Activated B cell treated with CpG ODN at 0.5 μM for 24 hours (primary cell): ENCODE measurements at regions of chr17 and their contacts with region 1.

Region 1: DNA sequence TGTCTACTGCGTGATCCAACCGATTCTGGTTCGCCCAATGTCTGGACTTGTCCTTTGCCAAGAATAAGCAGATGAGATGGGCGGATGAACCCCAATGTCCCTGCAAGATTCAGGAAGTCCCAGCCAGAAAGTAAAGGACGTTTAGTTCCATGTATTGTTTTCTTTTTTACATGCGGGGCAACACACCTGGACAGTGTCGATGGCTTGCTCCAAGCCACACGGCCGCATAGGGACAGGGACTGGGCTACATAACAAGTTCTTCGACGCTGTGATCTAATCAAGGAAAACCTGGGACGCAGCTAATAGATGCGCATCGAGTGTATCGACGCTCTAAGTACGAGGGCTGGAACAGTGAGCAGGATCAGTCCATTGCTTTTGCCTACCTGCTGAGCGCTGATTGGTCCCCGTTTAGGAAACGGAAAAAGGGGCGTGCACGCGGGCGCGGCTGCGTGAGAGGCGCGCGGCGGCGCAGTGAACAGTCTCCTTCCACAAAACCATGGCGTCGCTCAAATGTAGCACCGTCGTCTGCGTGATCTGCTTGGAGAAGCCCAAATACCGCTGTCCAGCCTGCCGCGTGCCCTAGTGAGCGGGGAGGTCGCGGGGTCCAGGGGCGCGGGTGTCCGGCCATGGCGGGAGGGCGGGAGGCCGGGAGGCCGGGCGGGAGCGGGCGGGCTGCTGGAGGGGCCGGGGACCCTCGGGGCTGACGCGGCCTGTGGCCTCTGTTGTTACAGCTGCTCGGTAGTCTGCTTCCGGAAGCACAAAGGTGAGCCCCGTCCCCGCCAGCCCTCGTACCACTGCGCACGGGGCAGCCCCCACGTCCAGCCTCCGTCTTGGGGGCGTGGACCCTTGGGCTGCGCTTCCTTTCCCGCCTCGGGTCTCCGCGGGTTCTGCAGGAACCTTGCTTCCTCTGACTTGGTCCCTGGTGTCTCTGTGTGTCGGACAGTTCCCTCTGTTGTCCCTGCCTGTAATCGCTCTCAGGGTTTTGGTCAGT is at the start of gene ZNHIT3:
- DNase-seq: peak; percentile 80
- ATAC-seq: peak; percentile 89
- H3K4me3 Mint-ChIP-seq: peak within 1 kb of the TSS; percentile 98
- H3K27ac Mint-ChIP-seq: peak within 1 kb of the TSS; percentile 96
- H3K4me1 Mint-ChIP-seq: peaks cover 60% of the 10 kb centered on the region
- H3K27me3 Mint-ChIP-seq: peaks cover 10% of the 10 kb centered on the region
- CTCF ChIP-seq: no peak
- total RNA-seq, gene ZNHIT3: 35.5 and 37.0 TPM in 2 replicates

Region 2: DNA sequence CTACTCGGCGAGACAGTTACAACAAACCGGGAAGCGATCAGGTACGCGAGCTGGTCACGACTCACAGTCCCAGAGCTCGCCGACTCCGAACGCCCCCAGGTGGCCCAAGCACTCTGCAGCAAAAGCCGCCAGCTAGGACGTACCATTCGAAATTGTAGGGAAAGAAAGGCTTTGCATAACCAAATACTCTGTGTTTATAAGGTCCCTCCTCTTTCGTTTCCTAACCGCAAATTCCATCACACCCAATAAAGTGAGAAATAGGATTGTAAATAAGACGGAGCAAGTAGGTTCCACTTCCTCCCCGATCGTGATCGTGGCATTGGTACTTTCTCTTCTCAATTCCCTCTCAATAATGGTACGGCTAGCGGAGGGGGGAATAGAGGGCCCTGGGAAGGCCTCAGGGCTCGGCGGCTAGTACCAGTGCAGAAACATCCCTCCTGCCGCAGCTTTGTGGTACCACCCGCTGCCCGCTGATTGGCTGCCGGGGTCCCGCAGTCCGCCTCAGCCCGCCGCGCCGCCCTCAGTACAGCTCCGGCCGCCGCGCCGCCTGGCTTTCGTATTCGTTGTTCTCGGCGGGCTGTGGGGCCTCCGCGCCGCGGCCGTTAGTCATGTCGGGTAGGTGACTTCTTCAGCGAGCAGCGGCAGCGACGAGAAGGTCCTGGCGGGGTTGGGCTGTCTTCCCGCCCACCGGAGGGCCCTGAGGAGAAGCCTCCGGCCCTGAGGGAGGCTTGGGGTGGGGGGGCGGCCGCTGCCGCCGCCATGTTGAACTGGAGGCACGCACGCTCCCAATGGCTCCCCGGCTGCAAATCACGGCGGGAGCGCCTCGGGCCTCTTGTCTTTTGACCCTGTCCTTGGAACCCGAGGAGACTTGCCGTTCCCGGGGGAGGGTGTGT is 677.3 kb before region 1 on chr17 and contains the start of gene TAF15:
- CTCF ChIA-PET with region 1: no interaction called
- POLR2A ChIA-PET with region 1: interaction called, 4 read pairs
- intact Hi-C with region 1: loop called (anchors 1 kb)
- DNase-seq: peak; percentile 91
- ATAC-seq: peak; percentile 88
- H3K4me3 Mint-ChIP-seq: peak within 1 kb of the TSS; percentile 93
- H3K27ac Mint-ChIP-seq: peak within 1 kb of the TSS; percentile 100
- H3K4me1 Mint-ChIP-seq: peaks cover 55% of the 10 kb centered on the region
- H3K27me3 Mint-ChIP-seq: no peaks in the 10 kb centered on the region
- CTCF ChIP-seq: no peak
- total RNA-seq, gene TAF15: 224 and 243 TPM in 2 replicates

Region 3: GRCh38 chr17:35969558-35970380 is 516.7 kb before region 1 on chr17:
- CTCF ChIA-PET with region 1: interaction called, 96 read pairs
- POLR2A ChIA-PET with region 1: interaction called, 4 read pairs
- intact Hi-C with region 1: loop called (anchors 1 kb)
- DNase-seq: peak; percentile 49
- ATAC-seq: peak; percentile 84
- H3K4me3 Mint-ChIP-seq: no peak overlapping the region
- H3K27ac Mint-ChIP-seq: no peak overlapping the region
- H3K4me1 Mint-ChIP-seq: peaks cover 1% of the 10 kb centered on the region
- H3K27me3 Mint-ChIP-seq: peaks cover 5% of the 10 kb centered on the region
- CTCF ChIP-seq: peak; percentile 62

Region 4: DNA sequence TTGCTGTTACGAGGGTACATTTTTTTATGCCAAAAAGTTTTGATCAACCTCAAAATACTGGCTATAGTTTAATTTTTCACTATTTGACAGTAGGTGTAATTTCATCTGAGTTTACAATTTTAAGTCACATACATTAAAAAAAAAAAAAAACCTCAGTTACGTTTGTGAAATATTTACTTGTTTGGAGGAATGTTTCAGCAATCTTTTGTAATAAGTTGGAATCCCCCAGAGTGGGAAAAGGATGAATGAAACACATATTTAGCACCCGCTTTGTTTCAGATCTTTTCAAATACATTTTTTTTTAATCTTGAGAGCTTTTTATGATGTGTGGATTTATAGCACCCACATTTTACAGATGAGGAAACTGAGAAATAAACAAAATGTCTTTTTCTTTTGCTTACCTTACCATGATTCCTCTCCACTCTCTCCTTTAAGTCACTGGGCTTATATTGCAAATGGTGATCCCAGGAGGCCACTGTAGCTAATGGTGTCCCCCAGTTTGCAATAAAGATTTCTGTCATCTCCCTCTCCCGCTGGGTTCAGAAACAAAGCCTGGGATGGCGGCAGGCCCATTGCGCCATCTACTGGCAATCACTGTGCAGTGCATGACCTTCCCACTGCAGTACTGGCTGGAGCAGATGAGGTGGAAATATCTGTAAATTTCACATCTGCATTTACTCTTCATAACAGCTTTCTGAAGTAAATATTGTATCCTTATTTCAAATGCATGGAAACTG is 337.8 kb before region 1 on chr17:
- CTCF ChIA-PET with region 1: interaction called, 9 read pairs
- POLR2A ChIA-PET with region 1: interaction called, 3 read pairs
- intact Hi-C with region 1: loop called (anchors 5 kb)
- DNase-seq: peak; percentile 60
- ATAC-seq: peak; percentile 87
- H3K4me3 Mint-ChIP-seq: peak overlapping the region; percentile 25
- H3K27ac Mint-ChIP-seq: peak overlapping the region; percentile 36
- H3K4me1 Mint-ChIP-seq: peaks cover 49% of the 10 kb centered on the region
- H3K27me3 Mint-ChIP-seq: peaks cover 5% of the 10 kb centered on the region
- CTCF ChIP-seq: peak; percentile 86

Region 5: DNA sequence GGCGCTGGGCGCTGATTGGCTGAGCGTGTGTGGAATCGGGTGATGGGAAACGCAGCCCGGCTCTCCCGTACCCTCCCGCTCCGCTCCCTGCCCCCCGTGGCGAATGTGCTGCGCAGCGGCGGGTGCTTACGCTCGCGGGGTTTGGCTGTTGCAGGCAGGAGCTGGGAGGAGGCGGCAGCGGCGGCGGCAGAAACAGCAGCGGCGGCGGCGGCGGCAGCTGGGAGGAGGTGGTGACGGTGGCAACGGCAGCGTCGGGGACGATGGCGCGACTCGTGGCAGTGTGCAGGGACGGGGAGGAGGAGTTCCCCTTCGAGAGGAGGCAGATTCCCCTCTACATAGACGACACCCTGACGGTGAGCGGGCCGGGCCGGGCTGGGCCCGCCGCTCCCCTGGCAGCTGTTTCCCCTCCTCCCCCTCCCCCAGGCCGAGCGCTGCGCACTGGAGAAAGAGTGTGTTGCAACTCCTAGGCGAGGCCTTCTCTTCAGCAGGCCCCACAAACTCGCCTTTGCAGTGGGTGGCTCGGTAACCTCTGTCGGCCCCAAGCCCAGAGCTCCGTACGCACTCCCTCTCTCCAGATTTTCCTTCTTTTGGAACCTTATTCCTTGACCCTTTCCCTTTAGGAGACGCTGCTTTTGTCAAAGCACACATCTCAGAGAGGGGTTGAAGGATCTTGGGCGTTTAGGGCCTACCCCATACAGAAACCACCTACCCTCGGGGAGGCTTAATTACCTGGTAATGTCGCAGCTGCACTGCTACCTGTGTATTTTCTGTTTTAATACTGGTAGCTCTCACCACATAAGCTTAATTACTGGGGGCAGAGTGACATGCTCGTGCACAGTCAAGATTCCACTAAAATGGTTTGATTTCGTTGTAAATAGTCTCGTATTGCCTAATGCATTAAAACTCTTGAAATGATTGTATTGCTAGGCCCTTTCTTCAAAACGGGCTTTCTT is 59.2 kb after region 1 on chr17:
- CTCF ChIA-PET with region 1: no interaction called
- POLR2A ChIA-PET with region 1: interaction called, 14 read pairs
- intact Hi-C with region 1: loop called (anchors 1 kb)
- DNase-seq: peak; percentile 94
- ATAC-seq: peak; percentile 67
- H3K4me3 Mint-ChIP-seq: peak overlapping the region; percentile 92
- H3K27ac Mint-ChIP-seq: peak overlapping the region; percentile 92
- H3K4me1 Mint-ChIP-seq: peaks cover 59% of the 10 kb centered on the region
- H3K27me3 Mint-ChIP-seq: no peaks in the 10 kb centered on the region
- CTCF ChIP-seq: no peak

Region 6: DNA sequence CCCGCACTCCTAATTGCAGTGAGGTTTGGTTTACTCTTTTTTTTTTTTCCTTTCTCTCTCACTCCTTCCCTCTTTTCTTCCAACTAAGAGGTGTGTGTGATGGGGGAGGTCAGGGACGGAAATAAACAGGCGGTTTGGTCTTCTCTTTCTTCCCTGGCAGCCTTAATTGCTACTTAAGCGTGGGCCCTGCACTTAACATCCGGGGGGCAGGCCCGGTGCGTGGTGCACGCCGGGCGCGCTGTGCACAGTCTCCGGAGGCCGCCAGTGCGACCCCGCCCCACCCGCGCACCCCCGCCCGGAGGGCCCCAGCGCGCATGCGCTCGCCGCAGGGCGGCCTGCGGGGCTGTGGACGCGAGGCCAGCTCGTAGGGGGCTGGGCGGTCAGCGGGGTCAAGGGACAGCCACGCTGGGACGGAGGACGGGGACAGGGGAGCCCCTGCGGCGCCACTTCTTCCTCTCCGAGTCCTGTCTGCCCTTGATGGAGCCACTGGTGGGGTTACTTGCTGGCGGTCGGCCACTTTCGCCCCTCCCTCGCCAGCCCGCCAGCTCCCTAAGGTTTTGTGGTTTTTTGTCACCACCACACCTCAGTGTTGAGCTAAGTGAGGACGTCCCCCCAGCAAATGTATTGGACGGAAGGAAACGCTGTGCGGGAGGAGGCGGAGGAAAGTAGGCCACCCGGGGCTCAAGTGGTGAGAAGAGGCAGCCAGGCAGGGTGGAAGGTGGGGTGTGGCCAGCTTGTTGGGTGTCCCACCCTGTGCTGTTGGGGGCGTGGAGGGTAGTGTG is 235.8 kb after region 1 on chr17:
- CTCF ChIA-PET with region 1: no interaction called
- POLR2A ChIA-PET with region 1: no interaction called
- intact Hi-C with region 1: loop called (anchors 1 kb)
- DNase-seq: peak; percentile 82
- ATAC-seq: peak; percentile 94
- H3K4me3 Mint-ChIP-seq: peak overlapping the region; percentile 85
- H3K27ac Mint-ChIP-seq: peak overlapping the region; percentile 90
- H3K4me1 Mint-ChIP-seq: peaks cover 54% of the 10 kb centered on the region
- H3K27me3 Mint-ChIP-seq: peaks cover 2% of the 10 kb centered on the region
- CTCF ChIP-seq: no peak